Activated T-helper 2 cell treated with anti-CD3 and anti-CD28 coated beads, Interferon-gamma antibody, Interleukin-2, Interleukin-4, amounts not matched to agents 10 μg/mL and 5 μg/mL and 100 μg/mL, durations not matched to agents 14 hours and 24 hours and 36 hours (primary cell): ENCODE measurements at regions of chr2 and their contacts with region 1.

Region 1: GRCh38 chr2:68121873-68122679 is 35.6 kb upstream of the PNO1 start:
- DNase-seq: peak; percentile 50
- H3K4me3 Mint-ChIP-seq: no peak overlapping the region
- H3K27ac Mint-ChIP-seq: no peak overlapping the region
- H3K4me1 Mint-ChIP-seq: peaks cover 14% of the 10 kb centered on the region
- H3K27me3 Mint-ChIP-seq: peaks cover 1% of the 10 kb centered on the region

Region 2: DNA sequence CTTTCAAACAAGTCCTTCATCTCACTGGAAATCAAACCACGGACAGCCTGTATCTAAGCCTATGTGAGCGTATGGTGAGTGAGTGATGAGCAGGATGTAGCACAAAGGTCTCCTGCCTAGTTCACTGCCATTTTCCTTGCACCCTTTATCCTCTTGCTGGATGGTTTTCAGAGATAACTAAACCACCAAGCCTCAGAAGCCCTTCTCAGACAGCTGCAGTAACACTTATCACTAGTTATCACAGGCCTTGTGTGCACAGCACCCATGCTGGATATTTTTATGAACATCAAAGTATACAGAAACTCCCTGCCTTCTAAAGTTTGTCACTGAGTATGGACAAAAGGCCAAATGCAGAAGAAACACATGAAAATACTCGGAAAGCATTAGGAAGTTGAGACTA is 128.7 kb before region 1 on chr2:
- intact Hi-C with region 1: no loop called
- DNase-seq: no peak
- H3K4me3 Mint-ChIP-seq: no peak overlapping the region
- H3K27ac Mint-ChIP-seq: no peak overlapping the region
- H3K4me1 Mint-ChIP-seq: no peaks in the 10 kb centered on the region
- H3K27me3 Mint-ChIP-seq: peaks cover 2% of the 10 kb centered on the region

Region 3: DNA sequence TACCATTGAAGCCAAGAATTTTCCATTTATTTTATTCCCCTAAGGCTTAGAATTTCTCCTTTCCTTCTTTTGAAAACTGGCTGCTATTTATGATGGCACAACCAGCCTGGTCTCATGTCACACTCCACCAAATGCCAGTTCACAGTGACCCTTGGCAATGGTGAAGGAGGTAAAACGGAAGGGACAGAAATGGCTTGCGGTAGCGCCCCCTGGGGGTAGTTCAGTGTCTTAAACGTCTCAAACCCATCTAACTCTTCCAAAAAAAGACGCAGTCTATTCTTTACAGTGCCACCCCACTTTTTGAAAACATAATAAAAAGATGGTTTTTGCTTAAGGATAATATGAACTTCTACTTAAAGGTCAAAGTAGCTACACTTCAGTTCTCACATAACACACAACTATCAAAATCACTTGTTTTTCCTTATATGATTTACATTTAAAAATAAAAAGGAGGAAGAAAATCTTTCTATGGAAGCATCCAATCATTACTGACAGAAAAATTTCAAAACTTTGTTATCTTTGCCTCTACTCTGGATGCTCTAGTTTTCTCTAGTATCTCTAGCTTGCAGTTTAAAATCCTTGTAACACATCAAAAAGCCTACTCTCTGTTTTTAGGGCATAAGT is 63.6 kb after region 1 on chr2:
- intact Hi-C with region 1: loop called (anchors 1 kb)
- DNase-seq: peak; percentile 35
- H3K4me3 Mint-ChIP-seq: no peak overlapping the region
- H3K27ac Mint-ChIP-seq: peak overlapping the region; percentile 67
- H3K4me1 Mint-ChIP-seq: peaks cover 20% of the 10 kb centered on the region
- H3K27me3 Mint-ChIP-seq: no peaks in the 10 kb centered on the region

Region 4: GRCh38 chr2:68237404-68237803 is 115.3 kb after region 1 on chr2:
- intact Hi-C with region 1: no loop called
- DNase-seq: no peak
- H3K4me3 Mint-ChIP-seq: no peak overlapping the region
- H3K27ac Mint-ChIP-seq: no peak overlapping the region
- H3K4me1 Mint-ChIP-seq: peaks cover 55% of the 10 kb centered on the region
- H3K27me3 Mint-ChIP-seq: no peaks in the 10 kb centered on the region

Region 5: DNA sequence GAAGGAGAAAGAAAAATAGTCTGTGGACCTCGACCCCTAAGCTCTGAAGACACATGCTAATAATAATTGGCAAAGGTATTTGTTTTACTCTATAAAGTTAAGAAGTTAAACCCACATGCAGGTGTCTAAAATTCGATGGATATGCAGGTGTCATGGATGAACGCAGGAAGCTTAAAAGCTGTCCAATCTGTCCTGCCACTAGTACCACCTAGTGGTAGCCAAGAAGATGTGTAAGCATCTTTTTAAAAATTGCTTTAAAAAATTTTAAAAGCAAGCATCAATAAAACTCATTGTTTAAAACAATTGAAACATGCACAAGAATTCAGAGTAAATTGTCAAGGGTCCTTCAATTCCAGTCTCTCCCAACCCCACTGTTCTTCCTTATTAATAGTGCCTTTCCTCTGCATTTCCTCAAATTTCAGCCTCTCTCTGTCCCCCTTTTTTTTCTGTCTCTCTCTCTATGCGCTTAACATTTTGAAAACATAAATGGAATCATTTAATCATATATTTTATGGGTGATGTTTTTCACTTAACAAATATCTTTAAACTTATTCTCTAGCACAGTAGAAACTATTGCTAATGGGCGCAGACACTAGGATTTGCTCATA is 160.8 kb after region 1 on chr2:
- intact Hi-C with region 1: loop called (anchors 1 kb)
- DNase-seq: no peak
- H3K4me3 Mint-ChIP-seq: no peak overlapping the region
- H3K27ac Mint-ChIP-seq: no peak overlapping the region
- H3K4me1 Mint-ChIP-seq: peaks cover 2% of the 10 kb centered on the region
- H3K27me3 Mint-ChIP-seq: peaks cover 60% of the 10 kb centered on the region